ENCODE measurements at regions of chr21 and their contacts with region 1.

Region 1: DNA sequence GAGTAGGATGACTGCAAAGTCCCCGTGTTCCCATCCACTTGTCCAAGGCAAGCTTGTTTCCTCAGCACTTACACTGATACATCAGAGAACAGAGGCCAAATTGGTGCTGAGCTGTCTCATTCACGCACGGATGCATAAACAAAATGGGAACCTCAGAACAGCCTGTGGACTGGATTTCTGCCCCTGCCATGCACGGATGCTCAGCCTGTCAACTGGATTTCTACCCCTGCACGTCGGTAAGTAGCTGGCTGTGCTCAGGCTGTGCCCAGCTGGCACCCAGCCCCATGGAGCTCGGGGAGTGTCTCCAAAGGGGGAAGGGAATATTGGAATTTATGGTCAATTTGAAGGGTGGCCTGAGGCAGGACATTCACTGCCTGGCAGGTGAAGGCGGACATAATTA is 40.8 kb upstream of the TMPRSS2 start:
- DNase-seq: no peak
- H3K4me3 ChIP-seq: no peak overlapping the region
- H3K27ac ChIP-seq: no peak overlapping the region
- H3K4me1 ChIP-seq: 0 out of 2 replicates have a peak, but pooled peaks cover 3% of the 10 kb centered on the region
- H3K27me3 ChIP-seq: no peaks in the 10 kb centered on the region
- CTCF ChIP-seq: no peak

Region 2: GRCh38 chr21:40587736-40588346 is 960.9 kb before region 1 on chr21:
- CTCF ChIA-PET with region 1: no interaction called
- POLR2A ChIA-PET with region 1: interaction called, 10 read pairs
- intact Hi-C with region 1: no loop called
- DNase-seq: no peak
- H3K4me3 ChIP-seq: no peak overlapping the region
- H3K27ac ChIP-seq: no peak overlapping the region
- H3K4me1 ChIP-seq: no peaks in the 10 kb centered on the region
- H3K27me3 ChIP-seq: no peaks in the 10 kb centered on the region
- CTCF ChIP-seq: no peak

Region 3: DNA sequence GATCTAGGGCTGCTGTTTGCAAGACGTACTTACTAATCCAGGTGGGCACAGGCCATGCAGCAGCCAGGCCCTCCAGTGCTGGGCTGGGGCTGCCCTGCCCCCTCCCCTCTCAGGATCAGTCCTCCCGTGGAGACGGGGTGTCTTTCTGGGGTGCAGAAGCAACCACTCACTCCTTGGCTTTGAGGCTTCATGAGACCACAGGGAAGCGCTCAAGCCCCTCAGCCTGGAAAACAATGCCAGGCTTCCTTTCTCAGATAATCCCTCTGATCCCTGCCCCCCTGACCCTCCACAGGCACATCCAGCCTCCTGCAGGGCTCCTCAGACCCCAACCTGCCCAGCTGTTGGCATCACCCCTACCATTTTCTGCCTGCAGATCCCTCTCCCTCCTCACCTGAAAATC is 418.9 kb after region 1 on chr21:
- CTCF ChIA-PET with region 1: interaction called, 10 read pairs
- POLR2A ChIA-PET with region 1: no interaction called
- intact Hi-C with region 1: no loop called
- DNase-seq: no peak
- H3K4me3 ChIP-seq: no peak overlapping the region
- H3K27ac ChIP-seq: no peak overlapping the region
- H3K4me1 ChIP-seq: peaks cover 7% of the 10 kb centered on the region; the same call in 1 of the 2 replicates
- H3K27me3 ChIP-seq: no peaks in the 10 kb centered on the region
- CTCF ChIP-seq: no peak